Activated CD4-positive, alpha-beta T cell treated with anti-CD3 and anti-CD28 coated beads for 36 hours (primary cell): ENCODE measurements at regions of chr1 and their contacts with region 1.

Region 1: DNA sequence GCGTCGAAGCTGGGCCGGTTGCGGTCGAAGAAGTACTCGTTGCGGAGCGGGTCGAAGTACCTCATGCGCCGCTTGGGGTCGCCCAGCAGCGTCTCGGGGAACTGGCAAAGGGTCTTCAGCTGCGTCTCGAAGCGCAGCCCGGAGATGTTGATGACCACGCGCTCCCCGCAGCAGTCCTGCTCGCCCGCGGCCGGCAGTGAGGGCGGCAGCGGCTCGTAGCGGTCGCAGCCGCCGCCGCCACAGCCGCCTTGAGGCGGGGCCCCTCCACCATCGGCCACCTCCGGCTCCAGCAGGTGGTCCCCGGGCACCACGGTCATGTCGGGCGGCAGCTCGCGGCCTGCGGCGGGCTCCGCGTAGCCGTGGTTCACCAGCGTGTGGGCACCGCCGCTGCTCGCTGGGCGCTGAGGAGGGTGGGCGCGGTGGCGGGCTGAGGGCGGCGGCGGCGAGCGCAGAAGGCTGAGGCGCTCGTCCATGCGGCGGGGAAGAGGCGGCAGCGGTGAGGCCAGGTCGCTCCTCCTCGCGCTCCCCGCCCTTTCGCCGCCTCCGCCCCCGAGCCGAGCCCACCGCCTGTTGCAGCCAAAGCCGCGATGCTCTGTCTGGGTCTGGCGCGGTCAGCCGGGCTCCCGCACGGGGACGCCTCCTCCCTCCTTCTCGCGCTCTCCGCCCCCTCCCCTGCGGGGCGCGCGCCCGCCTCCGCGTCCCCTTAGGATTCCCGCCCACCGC is at the start of gene KCNA3:
- DNase-seq: peak; percentile 74
- ATAC-seq: peak; percentile 9
- H3K4me3 Mint-ChIP-seq: peak within 1 kb of the TSS; percentile 99
- H3K27ac Mint-ChIP-seq: peak within 1 kb of the TSS; percentile 99
- H3K4me1 Mint-ChIP-seq: peaks cover 34% of the 10 kb centered on the region
- H3K27me3 Mint-ChIP-seq: no peaks in the 10 kb centered on the region
- total RNA-seq, gene KCNA3: 20.0 to 20.5 TPM

Region 2: GRCh38 chr1:110235834-110236682 is 438.4 kb before region 1 on chr1:
- CTCF ChIA-PET with region 1: no interaction called
- POLR2A ChIA-PET with region 1: no interaction called
- intact Hi-C with region 1: loop called in 1 of 2 experiments (anchors 1 kb)
- DNase-seq: peak; percentile 85
- ATAC-seq: peak; percentile 90
- H3K4me3 Mint-ChIP-seq: peak overlapping the region; percentile 42
- H3K27ac Mint-ChIP-seq: peak overlapping the region; percentile 95
- H3K4me1 Mint-ChIP-seq: peaks cover 57% of the 10 kb centered on the region
- H3K27me3 Mint-ChIP-seq: no peaks in the 10 kb centered on the region

Region 3: DNA sequence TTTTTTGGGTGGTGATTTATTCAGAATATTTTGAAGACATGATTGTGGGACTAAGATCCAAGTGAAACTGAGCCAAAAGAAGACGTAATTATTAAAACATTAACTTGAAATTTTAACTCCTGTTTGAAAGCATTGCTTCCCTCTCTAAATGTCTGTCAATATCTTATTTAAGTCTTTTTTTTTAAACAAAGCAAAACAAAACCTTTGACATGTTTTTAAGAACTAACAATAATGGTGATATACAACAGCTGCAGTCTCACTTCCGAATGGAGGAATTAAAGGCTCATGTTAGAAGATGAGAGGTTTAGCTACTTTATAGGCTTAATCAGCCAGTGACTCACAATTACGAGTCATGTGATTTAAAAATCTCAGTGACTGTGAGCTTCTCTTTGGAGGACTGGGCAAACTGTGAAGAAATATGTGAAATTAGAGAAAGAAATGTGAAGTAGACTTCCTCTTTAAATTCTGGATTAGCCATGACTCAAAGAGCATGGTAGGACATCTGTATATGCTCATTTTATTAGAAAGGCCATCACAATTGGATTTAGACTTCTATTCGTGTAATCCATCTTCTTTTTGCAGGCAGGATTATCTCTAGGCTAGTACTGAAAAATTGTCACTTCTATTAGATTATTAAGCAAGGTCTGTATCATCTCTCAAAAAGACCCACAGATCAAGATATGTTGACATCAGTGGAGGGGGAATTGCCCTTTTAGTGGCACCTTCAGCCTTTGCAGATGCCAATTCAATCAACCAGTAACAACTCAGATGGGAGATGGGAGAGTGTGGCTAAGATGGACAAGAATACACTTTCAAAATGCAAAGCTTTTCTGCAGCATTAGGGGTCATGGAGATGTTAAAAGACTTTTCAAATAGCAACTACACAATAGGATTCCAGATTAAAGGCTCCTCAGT is 28.4 kb before region 1 on chr1:
- CTCF ChIA-PET with region 1: interaction called, 8 read pairs
- POLR2A ChIA-PET with region 1: interaction called, 38 read pairs
- intact Hi-C with region 1: loop called (anchors 1 kb)
- DNase-seq: no peak
- ATAC-seq: peak; percentile 52
- H3K4me3 Mint-ChIP-seq: peak overlapping the region; percentile 25
- H3K27ac Mint-ChIP-seq: no peak overlapping the region
- H3K4me1 Mint-ChIP-seq: peaks cover 41% of the 10 kb centered on the region
- H3K27me3 Mint-ChIP-seq: no peaks in the 10 kb centered on the region

Region 4: DNA sequence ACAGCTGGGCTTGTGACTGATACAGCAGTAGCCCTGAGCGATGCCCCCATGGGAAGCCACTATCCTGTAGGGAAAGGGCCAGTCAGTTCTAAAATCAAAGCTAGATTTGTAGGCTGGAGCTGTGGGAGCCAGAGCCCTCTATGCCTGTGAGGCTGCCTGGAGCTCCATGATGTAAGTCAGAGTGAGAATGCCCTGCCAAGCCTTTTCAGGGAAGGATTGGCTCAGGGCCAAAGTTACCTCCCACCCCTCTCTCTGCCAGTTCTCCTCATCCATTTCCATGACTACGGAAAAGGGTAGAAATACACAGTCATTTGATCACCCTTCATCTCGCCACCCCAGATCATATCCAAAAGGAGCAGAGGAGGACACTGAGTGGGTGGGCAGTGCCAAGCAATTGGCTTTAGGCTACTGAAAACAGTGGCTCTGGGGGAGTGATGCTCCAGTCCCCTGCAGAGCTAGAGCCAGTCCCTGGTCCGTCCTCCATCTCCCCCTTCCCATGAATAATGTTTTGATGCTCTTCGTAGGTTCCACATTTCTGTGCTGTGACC is 59.7 kb after region 1 on chr1:
- CTCF ChIA-PET with region 1: no interaction called
- POLR2A ChIA-PET with region 1: no interaction called
- intact Hi-C with region 1: no loop called
- DNase-seq: no peak
- ATAC-seq: no peak
- H3K4me3 Mint-ChIP-seq: no peak overlapping the region
- H3K27ac Mint-ChIP-seq: no peak overlapping the region
- H3K4me1 Mint-ChIP-seq: no peaks in the 10 kb centered on the region
- H3K27me3 Mint-ChIP-seq: no peaks in the 10 kb centered on the region

Region 5: GRCh38 chr1:110879758-110880606 is 205.5 kb after region 1 on chr1:
- CTCF ChIA-PET with region 1: interaction called, 4 read pairs
- POLR2A ChIA-PET with region 1: interaction called, 3 read pairs
- intact Hi-C with region 1: loop called (anchors 1 kb)
- DNase-seq: peak; percentile 77
- ATAC-seq: peak; percentile 66
- H3K4me3 Mint-ChIP-seq: peak overlapping the region; percentile 85
- H3K27ac Mint-ChIP-seq: peak overlapping the region; percentile 100
- H3K4me1 Mint-ChIP-seq: peaks cover 63% of the 10 kb centered on the region
- H3K27me3 Mint-ChIP-seq: no peaks in the 10 kb centered on the region

Region 6: GRCh38 chr1:111203681-111204200 is 529.2 kb after region 1 on chr1:
- CTCF ChIA-PET with region 1: no interaction called
- POLR2A ChIA-PET with region 1: no interaction called
- intact Hi-C with region 1: loop called in 1 of 2 experiments (anchors 5 kb)
- DNase-seq: peak; percentile 92
- ATAC-seq: peak; percentile 27
- H3K4me3 Mint-ChIP-seq: peak overlapping the region; percentile 96
- H3K27ac Mint-ChIP-seq: peak overlapping the region; percentile 98
- H3K4me1 Mint-ChIP-seq: peaks cover 56% of the 10 kb centered on the region
- H3K27me3 Mint-ChIP-seq: no peaks in the 10 kb centered on the region